IMR-90 (cell line): ENCODE measurements at regions of chr10 and their contacts with region 1.

Region 1: DNA sequence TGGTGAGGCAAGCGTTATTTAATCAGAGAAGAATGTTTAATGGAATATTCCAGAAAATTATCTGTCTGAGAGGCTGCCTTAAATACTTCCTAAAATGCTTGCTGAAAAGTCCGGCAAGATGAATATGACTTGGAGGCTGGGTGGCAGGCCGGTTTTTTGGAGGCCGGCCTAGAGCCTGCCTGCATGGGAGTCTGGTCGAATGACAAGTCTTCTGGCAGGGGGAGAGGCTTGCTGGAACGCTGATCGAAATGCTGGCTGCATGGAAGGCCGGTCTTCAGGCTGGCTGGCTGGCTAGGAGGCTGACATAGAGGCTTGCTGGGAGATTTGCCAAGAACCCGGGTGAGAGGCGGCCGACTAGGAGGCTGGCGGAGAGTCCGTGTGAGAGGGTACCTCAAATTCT is 135.7 kb downstream of the OR13A1 start:
- DNase-seq: peak; percentile 6
- ATAC-seq: no peak
- H3K4me3 ChIP-seq: no peak overlapping the region
- H3K27ac ChIP-seq: no peak overlapping the region
- H3K4me1 ChIP-seq: no peaks in the 10 kb centered on the region
- H3K27me3 ChIP-seq: no peaks in the 10 kb centered on the region
- CTCF ChIP-seq: no peak
- POLR2A ChIP-seq: no peak
- RAD21 ChIP-seq: no peak

Region 2: GRCh38 chr10:45080331-45080730 is 99.4 kb before region 1 on chr10:
- CTCF ChIA-PET with region 1: no interaction called
- POLR2A ChIA-PET with region 1: no interaction called
- dilution Hi-C with region 1: no loop called
- in situ Hi-C with region 1: no loop called
- intact Hi-C with region 1: loop called (anchors 10 kb)
- DNase-seq: no peak
- ATAC-seq: no peak
- H3K4me3 ChIP-seq: no peak overlapping the region
- H3K27ac ChIP-seq: no peak overlapping the region
- H3K4me1 ChIP-seq: no peaks in the 10 kb centered on the region
- H3K27me3 ChIP-seq: no peaks in the 10 kb centered on the region; the same call in 1 of the 2 replicates
- CTCF ChIP-seq: no peak
- POLR2A ChIP-seq: no peak
- RAD21 ChIP-seq: no peak

Region 3: DNA sequence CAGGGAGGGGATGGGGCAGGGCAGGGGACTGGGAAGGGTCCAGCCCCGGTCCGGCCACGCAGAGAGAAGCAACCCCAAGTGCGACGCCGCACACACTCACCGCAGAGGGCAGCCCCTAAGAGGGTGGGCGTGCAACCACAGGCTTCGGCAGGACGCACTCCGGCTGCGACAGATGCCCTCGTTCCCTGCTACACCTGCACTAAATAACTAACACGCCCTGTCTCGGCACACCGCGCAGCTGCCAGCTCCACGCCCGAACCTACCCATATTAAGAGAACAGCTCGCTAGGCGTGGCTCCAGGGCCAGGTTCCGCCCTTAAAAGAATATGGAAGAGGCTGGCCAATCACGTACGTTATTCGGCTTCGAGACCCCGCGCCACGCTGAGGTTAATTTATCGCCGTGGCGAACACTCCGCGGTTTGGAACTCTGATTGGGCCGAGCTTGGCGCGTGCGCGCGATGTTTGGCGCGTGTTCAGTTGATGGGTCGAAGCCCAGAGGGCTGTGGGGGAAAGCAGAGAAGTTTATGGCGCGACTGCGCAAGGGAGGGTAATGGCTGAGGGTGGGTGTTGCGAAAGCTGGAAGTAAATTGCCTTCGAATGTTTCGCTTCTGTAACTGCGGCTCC is 44.6 kb after region 1 on chr10:
- CTCF ChIA-PET with region 1: no interaction called
- POLR2A ChIA-PET with region 1: no interaction called
- dilution Hi-C with region 1: no loop called
- in situ Hi-C with region 1: no loop called
- intact Hi-C with region 1: no loop called
- DNase-seq: no peak
- ATAC-seq: no peak
- H3K4me3 ChIP-seq: no peak overlapping the region
- H3K27ac ChIP-seq: no peak overlapping the region
- H3K4me1 ChIP-seq: no peaks in the 10 kb centered on the region
- H3K27me3 ChIP-seq: 0 out of 2 replicates have a peak, but pooled peaks cover 2% of the 10 kb centered on the region
- CTCF ChIP-seq: no peak
- POLR2A ChIP-seq: no peak
- RAD21 ChIP-seq: no peak